ENCODE measurements at regions of chr1 and their contacts with region 1.

Region 1: DNA sequence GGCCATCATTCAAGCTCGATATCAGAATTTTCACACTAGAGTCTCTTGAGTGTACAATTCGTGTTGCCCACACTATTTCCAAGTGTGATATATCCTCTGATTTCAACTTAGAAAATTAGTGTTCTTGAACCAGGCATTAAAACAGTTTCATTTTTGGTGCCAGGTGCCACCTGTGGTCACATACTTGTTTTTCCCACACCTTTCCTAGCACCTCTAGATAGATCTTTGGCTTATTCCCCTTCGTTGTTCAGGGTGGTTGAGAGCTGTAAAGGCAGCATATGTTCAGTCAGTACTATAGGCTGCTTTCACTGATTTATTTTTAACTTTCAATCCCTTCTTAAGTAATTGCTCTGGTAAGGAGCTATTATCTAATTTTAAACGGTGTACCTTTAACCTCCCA is 131.1 kb downstream of the NEK7 start:
- DNase-seq: no peak
- CTCF ChIP-seq: no peak

Region 2: DNA sequence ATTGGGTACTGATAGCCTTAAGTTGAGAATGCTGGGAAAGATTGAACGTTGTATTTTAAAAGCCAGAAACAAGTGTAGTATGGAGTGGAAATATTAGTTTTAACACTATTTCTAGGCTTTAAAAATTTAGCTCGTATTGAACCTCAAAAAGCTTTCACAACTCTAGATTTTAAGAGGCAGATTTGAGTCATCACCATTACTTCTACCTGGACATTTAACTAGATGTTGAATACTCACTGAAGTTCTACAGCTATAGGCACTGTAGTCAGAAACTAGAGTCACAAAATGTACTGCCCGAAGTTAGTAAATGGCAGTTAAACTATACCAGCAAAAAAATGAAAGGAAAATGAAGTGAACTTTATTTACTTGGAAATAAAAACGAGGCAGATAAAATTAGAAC is 34.7 kb before region 1 on chr1:
- CTCF ChIA-PET with region 1: no interaction called
- POLR2A ChIA-PET with region 1: no interaction called
- DNase-seq: peak; percentile 16
- CTCF ChIP-seq: no peak

Region 3: GRCh38 chr1:198276672-198277071 is 11.2 kb before region 1 on chr1:
- CTCF ChIA-PET with region 1: interaction called, 13 read pairs
- POLR2A ChIA-PET with region 1: no interaction called
- DNase-seq: no peak
- CTCF ChIP-seq: no peak

Region 4: GRCh38 chr1:198298640-198299039 is 10.7 kb after region 1 on chr1:
- CTCF ChIA-PET with region 1: interaction called, 14 read pairs
- POLR2A ChIA-PET with region 1: no interaction called
- DNase-seq: no peak
- CTCF ChIP-seq: no peak

Region 5: GRCh38 chr1:198328458-198329127 is 40.7 kb after region 1 on chr1:
- CTCF ChIA-PET with region 1: no interaction called
- POLR2A ChIA-PET with region 1: no interaction called
- DNase-seq: no peak
- CTCF ChIP-seq: no peak

Region 6: GRCh38 chr1:198699167-198700015 is 411.5 kb after region 1 on chr1:
- CTCF ChIA-PET with region 1: no interaction called
- POLR2A ChIA-PET with region 1: no interaction called
- DNase-seq: no peak
- CTCF ChIP-seq: peak; percentile 63

Measured in GM10248 (cell line).